ENCODE measurements at regions of chrX and their contacts with region 1.

Region 1: DNA sequence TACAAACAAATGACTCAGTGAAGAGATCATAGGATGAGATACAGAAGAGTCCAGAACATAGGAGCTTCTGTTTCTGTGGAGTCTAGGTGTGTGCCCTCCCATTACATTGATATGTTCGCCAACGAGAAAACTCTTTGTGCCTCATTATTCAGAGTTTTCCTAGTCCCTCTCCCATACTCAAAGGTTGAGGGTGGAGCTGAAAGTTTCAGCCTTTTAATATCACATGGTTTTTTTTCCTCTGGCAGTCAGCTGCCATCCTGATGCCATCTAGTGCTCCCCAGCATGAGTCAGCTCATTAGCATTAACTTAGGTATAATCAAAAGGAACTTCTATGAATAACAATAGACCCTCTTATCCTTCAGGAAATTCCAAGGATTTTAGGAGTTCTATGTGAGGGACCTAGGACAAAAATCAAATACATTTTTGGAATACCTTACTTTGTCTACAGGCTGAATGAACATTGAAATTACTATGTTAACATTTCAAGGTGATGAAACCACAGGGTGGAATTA is 559.6 kb upstream of the AMOT start:
- DNase-seq: peak in 1 of 2 experiments; percentile 3
- H3K4me3 ChIP-seq: no peak overlapping the region
- H3K4me3 Mint-ChIP-seq: no peak overlapping the region
- H3K27ac Mint-ChIP-seq: peak overlapping the region; percentile 78
- H3K4me1 ChIP-seq: peaks cover 23% of the 10 kb centered on the region
- H3K4me1 Mint-ChIP-seq: no peaks in the 10 kb centered on the region
- H3K27me3 ChIP-seq: no peaks in the 10 kb centered on the region
- H3K27me3 Mint-ChIP-seq: no peaks in the 10 kb centered on the region
- CTCF ChIP-seq: no peak

Region 2: GRCh38 chrX:113330416-113330815 is 69.8 kb before region 1 on chrX:
- CTCF ChIA-PET with region 1: no interaction called
- POLR2A ChIA-PET with region 1: no interaction called
- intact Hi-C with region 1: no loop called
- DNase-seq: no peak
- H3K4me3 ChIP-seq: no peak overlapping the region
- H3K4me3 Mint-ChIP-seq: no peak overlapping the region
- H3K27ac Mint-ChIP-seq: no peak overlapping the region
- H3K4me1 ChIP-seq: no peaks in the 10 kb centered on the region
- H3K4me1 Mint-ChIP-seq: no peaks in the 10 kb centered on the region
- H3K27me3 ChIP-seq: no peaks in the 10 kb centered on the region
- H3K27me3 Mint-ChIP-seq: no peaks in the 10 kb centered on the region
- CTCF ChIP-seq: no peak

Region 3: DNA sequence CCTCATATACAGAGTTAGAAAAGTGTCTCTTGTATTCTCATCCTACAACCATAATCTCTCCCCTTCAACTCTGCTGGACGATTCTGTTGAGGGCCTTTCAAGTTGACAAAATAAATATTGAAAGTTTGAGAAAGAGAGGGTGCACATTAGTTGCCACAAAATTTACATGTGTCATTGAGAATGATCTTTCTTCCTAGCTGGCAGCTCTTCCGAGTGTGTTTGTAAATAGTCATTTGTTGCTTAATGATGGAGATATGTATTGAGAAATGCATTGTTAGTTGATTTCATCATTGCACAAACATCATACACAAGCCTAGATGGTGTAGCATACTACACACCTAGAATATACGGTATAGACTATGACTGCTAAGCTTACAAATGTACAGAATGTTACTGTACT is 73.2 kb after region 1 on chrX:
- CTCF ChIA-PET with region 1: no interaction called
- POLR2A ChIA-PET with region 1: no interaction called
- intact Hi-C with region 1: no loop called
- DNase-seq: no peak
- H3K4me3 ChIP-seq: no peak overlapping the region
- H3K4me3 Mint-ChIP-seq: no peak overlapping the region
- H3K27ac Mint-ChIP-seq: no peak overlapping the region
- H3K4me1 ChIP-seq: no peaks in the 10 kb centered on the region
- H3K4me1 Mint-ChIP-seq: no peaks in the 10 kb centered on the region
- H3K27me3 ChIP-seq: no peaks in the 10 kb centered on the region
- H3K27me3 Mint-ChIP-seq: no peaks in the 10 kb centered on the region
- CTCF ChIP-seq: no peak

Region 4: DNA sequence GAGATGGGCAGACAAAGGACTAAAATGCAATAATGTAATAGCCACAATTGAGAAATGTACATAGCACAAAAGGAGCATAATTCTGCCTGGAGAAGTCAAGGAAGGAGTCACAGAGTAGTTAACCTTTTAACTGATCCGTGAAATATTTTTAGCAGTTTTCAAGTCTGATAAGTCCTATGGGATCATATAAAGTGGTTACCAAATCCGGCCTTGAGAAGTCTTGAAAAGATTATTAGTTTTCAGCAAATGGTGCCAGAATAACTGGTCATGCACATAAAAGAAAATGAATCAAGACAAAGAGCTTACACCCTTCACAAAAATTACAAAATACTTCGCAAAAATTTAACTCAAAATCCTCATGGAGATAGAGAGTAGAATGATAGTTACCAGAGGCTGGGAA is 229.1 kb after region 1 on chrX:
- CTCF ChIA-PET with region 1: no interaction called
- POLR2A ChIA-PET with region 1: no interaction called
- intact Hi-C with region 1: no loop called
- DNase-seq: no peak
- H3K4me3 ChIP-seq: no peak overlapping the region
- H3K4me3 Mint-ChIP-seq: no peak overlapping the region
- H3K27ac Mint-ChIP-seq: no peak overlapping the region
- H3K4me1 ChIP-seq: no peaks in the 10 kb centered on the region
- H3K4me1 Mint-ChIP-seq: no peaks in the 10 kb centered on the region
- H3K27me3 ChIP-seq: no peaks in the 10 kb centered on the region
- H3K27me3 Mint-ChIP-seq: no peaks in the 10 kb centered on the region
- CTCF ChIP-seq: no peak

Region 5: GRCh38 chrX:113802837-113803236 is 402.6 kb after region 1 on chrX:
- CTCF ChIA-PET with region 1: no interaction called
- POLR2A ChIA-PET with region 1: no interaction called
- intact Hi-C with region 1: loop called (anchors 2 kb)
- DNase-seq: peak in 1 of 2 experiments; percentile 49
- H3K4me3 ChIP-seq: no peak overlapping the region
- H3K4me3 Mint-ChIP-seq: no peak overlapping the region
- H3K27ac Mint-ChIP-seq: peak overlapping the region; percentile 56
- H3K4me1 ChIP-seq: peaks cover 30% of the 10 kb centered on the region
- H3K4me1 Mint-ChIP-seq: peaks cover 6% of the 10 kb centered on the region
- H3K27me3 ChIP-seq: no peaks in the 10 kb centered on the region
- H3K27me3 Mint-ChIP-seq: no peaks in the 10 kb centered on the region
- CTCF ChIP-seq: no peak

Region 6: DNA sequence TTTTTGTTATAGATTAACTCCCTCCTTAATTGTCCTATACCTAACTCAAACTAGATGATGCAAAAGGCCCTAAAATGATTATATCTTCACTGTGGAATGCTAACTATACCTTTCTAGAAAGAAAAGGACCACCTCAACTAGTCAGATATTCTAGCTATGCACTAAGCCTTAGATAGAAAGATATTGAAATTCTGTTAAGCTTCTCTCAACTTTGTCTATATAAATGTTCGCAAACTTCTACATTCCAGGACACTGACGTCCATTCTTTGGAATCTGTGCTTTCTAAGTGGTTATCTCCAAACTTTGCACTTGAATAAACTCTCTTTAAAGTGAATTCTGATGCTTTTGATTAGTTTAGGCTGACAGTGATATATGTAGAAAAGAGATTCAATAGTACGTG is 444.7 kb after region 1 on chrX:
- CTCF ChIA-PET with region 1: no interaction called
- POLR2A ChIA-PET with region 1: no interaction called
- intact Hi-C with region 1: loop called (anchors 2 kb)
- DNase-seq: peak in 1 of 2 experiments; percentile 16
- H3K4me3 ChIP-seq: no peak overlapping the region
- H3K4me3 Mint-ChIP-seq: peak overlapping the region; percentile 36
- H3K27ac Mint-ChIP-seq: peak overlapping the region; percentile 79
- H3K4me1 ChIP-seq: peaks cover 17% of the 10 kb centered on the region
- H3K4me1 Mint-ChIP-seq: peaks cover 15% of the 10 kb centered on the region
- H3K27me3 ChIP-seq: no peaks in the 10 kb centered on the region
- H3K27me3 Mint-ChIP-seq: no peaks in the 10 kb centered on the region
- CTCF ChIP-seq: no peak

Measured in Caco-2 (cell line).